B cell (primary cell): ENCODE measurements at regions of chr15 and their contacts with region 1.

Region 1: DNA sequence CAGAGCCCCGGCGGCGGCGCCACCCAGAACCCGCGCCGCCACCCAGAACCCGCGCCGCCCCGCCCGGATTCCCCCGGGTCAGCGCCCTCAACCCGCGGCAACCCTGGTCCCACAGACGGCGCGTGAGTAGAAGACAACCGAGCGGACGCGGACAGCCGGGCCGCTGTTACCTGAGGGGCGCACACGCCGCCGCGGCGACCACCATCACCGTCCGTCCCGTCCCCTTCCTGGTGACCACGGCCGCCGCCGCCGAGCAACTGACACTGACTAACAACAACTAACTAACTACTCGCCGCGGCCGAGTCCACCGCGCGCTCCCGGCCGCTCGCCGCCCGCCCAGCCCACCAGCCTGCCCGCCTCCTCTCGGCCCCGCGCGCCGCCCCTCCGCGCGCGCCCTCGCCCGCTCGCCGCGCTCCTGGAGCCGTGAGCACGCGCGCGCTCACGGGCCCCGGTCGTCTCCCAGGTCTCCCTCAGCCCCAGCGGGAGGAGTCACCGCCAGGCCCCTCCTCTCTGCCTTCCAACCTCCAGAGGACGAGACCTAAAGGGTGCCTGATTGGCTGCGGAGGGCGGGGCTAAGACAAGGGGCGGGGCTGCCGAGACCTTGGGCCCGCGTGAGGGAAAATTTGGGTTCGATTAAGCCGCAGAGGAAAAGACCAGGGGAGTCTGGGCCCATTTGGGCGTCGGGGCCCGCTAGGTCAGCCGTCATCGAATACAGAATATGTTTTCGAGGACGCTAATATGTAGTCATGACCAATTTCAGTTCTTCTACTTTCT is at the start of gene PEAK1:
- DNase-seq: peak; percentile 100
- ATAC-seq: peak; percentile 95
- H3K4me3 ChIP-seq: peak within 1 kb of the TSS; percentile 64 to 97 (median 95)
- H3K4me3 Mint-ChIP-seq: peak within 1 kb of the TSS; percentile 99
- H3K27ac ChIP-seq: peak within 1 kb of the TSS; percentile 77 to 95
- H3K27ac Mint-ChIP-seq: peak within 1 kb of the TSS; percentile 98
- H3K4me1 ChIP-seq: peaks cover 16 to 17% of the 10 kb centered on the region in 2 donors
- H3K4me1 Mint-ChIP-seq: peaks cover 54% of the 10 kb centered on the region
- H3K27me3 ChIP-seq: no peaks in the 10 kb centered on the region
- H3K27me3 Mint-ChIP-seq: no peaks in the 10 kb centered on the region
- CTCF ChIP-seq: no peak
- total RNA-seq, gene PEAK1: 38.0 and 53.2 TPM in 2 replicates

Region 2: DNA sequence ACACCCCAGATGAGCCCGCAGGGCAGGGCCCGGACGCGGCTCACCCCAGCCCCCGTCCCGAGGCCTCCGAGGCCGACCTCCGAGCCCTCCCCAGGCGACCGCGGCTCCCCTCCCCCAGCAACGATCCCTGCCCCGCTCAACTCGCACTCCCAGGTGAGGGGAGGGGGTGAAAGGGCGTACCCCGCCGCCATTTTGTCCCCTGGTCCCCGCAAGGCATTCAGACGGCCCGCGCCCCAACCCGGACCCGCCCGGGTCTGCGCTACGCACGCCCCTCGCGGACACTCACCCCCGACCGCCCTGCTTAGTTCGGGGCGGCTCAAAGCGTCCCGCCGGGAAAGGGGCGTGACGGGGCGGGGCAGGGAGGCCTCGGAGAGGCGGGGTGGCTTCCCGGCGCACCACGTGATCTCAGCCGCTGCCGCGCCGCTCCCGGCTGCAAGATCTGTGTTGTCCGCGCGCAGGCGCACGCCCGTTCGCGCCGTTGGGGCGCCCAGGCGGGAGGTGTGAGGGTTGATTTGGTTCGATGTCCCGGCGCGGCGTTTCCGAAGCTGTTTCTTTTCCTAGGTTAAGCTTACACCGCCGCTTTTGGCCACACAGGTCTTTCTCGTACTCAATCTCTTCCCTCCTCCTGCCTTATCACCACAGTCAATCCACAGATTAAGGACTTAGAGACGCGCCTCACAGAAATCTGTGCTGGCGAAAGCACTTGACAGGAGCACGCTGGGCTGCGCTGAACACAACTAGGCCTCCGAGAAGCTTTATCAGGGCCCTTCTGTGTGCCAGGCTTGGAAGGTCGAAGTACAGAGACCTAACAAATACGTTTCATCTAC is 514.8 kb before region 1 on chr15 and contains the start of gene SCAPER:
- CTCF ChIA-PET with region 1: no interaction called
- POLR2A ChIA-PET with region 1: no interaction called
- intact Hi-C with region 1: loop called (anchors 1 kb)
- DNase-seq: peak; percentile 94
- ATAC-seq: peak; percentile 88
- H3K4me3 ChIP-seq: peak within 1 kb of the TSS; percentile 76 to 93 (median 80)
- H3K4me3 Mint-ChIP-seq: peak within 1 kb of the TSS; percentile 91
- H3K27ac ChIP-seq: peak within 1 kb of the TSS; percentile 82 to 92
- H3K27ac Mint-ChIP-seq: peak within 1 kb of the TSS; percentile 89
- H3K4me1 ChIP-seq: peaks cover 32 to 36% of the 10 kb centered on the region in 2 donors
- H3K4me1 Mint-ChIP-seq: peaks cover 52% of the 10 kb centered on the region
- H3K27me3 ChIP-seq: no peaks in the 10 kb centered on the region
- H3K27me3 Mint-ChIP-seq: no peaks in the 10 kb centered on the region
- CTCF ChIP-seq: no peak
- total RNA-seq, gene SCAPER: 59.5 and 61.6 TPM in 2 replicates

Region 3: GRCh38 chr15:77070495-77071304 is 349.3 kb before region 1 on chr15 and contains the start of gene TSPAN3:
- CTCF ChIA-PET with region 1: no interaction called
- POLR2A ChIA-PET with region 1: no interaction called
- intact Hi-C with region 1: loop called (anchors 1 kb)
- DNase-seq: peak; percentile 95
- ATAC-seq: peak; percentile 94
- H3K4me3 ChIP-seq: peak within 1 kb of the TSS; percentile 69 to 92 (median 79)
- H3K4me3 Mint-ChIP-seq: peak within 1 kb of the TSS; percentile 87
- H3K27ac ChIP-seq: peak within 1 kb of the TSS; percentile 71 to 84
- H3K27ac Mint-ChIP-seq: peak within 1 kb of the TSS; percentile 94
- H3K4me1 ChIP-seq: peaks cover 47 to 49% of the 10 kb centered on the region in 2 donors
- H3K4me1 Mint-ChIP-seq: peaks cover 52% of the 10 kb centered on the region
- H3K27me3 ChIP-seq: no peaks in the 10 kb centered on the region
- H3K27me3 Mint-ChIP-seq: no peaks in the 10 kb centered on the region
- CTCF ChIP-seq: no peak
- total RNA-seq, gene TSPAN3: 109 TPM in 2 replicates

Region 4: GRCh38 chr15:77186594-77187011 is 233.4 kb before region 1 on chr15:
- CTCF ChIA-PET with region 1: interaction called, 4 read pairs
- POLR2A ChIA-PET with region 1: interaction called, 3 read pairs
- intact Hi-C with region 1: loop called (anchors 5 kb)
- DNase-seq: peak; percentile 60
- ATAC-seq: no peak
- H3K4me3 ChIP-seq: no peak overlapping the region
- H3K4me3 Mint-ChIP-seq: no peak overlapping the region
- H3K27ac ChIP-seq: peak overlapping the region; percentile 79 to 80
- H3K27ac Mint-ChIP-seq: peak overlapping the region; percentile 53
- H3K4me1 ChIP-seq: peaks cover 76% of the 10 kb centered on the region in 2 donors
- H3K4me1 Mint-ChIP-seq: peaks cover 66% of the 10 kb centered on the region
- H3K27me3 ChIP-seq: no peaks in the 10 kb centered on the region
- H3K27me3 Mint-ChIP-seq: no peaks in the 10 kb centered on the region
- CTCF ChIP-seq: peak; percentile 76

Region 5: GRCh38 chr15:77376772-77377171 is 43.3 kb before region 1 on chr15:
- CTCF ChIA-PET with region 1: no interaction called
- POLR2A ChIA-PET with region 1: no interaction called
- intact Hi-C with region 1: no loop called
- DNase-seq: no peak
- ATAC-seq: no peak
- H3K4me3 ChIP-seq: no peak overlapping the region
- H3K4me3 Mint-ChIP-seq: no peak overlapping the region
- H3K27ac ChIP-seq: no peak overlapping the region
- H3K27ac Mint-ChIP-seq: no peak overlapping the region
- H3K4me1 ChIP-seq: no peaks in the 10 kb centered on the region
- H3K4me1 Mint-ChIP-seq: peaks cover 27% of the 10 kb centered on the region
- H3K27me3 ChIP-seq: no peaks in the 10 kb centered on the region
- H3K27me3 Mint-ChIP-seq: no peaks in the 10 kb centered on the region
- CTCF ChIP-seq: no peak

Region 6: DNA sequence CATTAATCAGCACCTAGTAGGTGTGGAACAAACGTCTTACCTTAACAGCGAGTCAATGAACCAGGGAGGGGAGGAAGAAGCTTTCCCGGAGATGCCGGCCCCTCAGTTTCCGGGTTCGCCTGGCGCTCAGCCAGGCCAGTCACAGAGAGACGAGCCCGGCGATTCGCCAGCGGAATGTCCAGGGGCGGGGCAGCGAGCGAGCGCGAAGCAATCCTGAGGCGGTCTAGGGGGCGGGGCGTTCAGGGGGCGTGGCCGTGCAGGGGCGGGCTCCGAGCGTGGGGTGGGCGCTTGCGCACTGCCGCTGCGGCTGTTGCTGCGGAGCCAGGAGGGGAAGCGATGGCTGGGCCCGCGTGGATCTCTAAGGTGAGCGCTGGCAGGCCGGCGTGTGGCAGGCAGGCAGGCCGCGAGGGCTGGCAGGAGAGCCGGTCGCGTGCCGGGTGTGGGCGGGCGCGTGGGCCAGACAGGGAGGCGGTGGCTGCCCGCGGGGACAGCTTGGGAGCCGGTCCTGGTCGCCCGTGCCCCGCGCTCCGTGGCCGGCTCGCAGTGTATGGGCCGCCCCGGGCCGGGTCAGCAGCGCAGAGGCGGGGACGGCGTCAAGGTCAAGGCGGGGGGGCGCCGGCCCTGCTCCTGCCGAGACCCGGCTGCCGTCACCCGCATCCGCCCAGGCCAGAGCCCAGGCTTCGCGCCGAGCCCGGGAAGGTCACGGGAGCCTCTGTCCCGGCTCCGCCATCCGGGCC is 729.2 kb after region 1 on chr15 and contains the start of gene IDH3A:
- CTCF ChIA-PET with region 1: no interaction called
- POLR2A ChIA-PET with region 1: no interaction called
- intact Hi-C with region 1: loop called (anchors 10 kb)
- DNase-seq: peak; percentile 99
- ATAC-seq: peak; percentile 97
- H3K4me3 ChIP-seq: peak within 1 kb of the TSS; percentile 63 to 93 (median 81)
- H3K4me3 Mint-ChIP-seq: peak within 1 kb of the TSS; percentile 98
- H3K27ac ChIP-seq: peak within 1 kb of the TSS; percentile 32 to 81
- H3K27ac Mint-ChIP-seq: peak within 1 kb of the TSS; percentile 93
- H3K4me1 ChIP-seq: peaks cover 20 to 25% of the 10 kb centered on the region in 2 donors
- H3K4me1 Mint-ChIP-seq: peaks cover 41% of the 10 kb centered on the region
- H3K27me3 ChIP-seq: no peaks in the 10 kb centered on the region
- H3K27me3 Mint-ChIP-seq: no peaks in the 10 kb centered on the region
- CTCF ChIP-seq: no peak
- total RNA-seq, gene IDH3A: 64.5 and 71.7 TPM in 2 replicates